ENCODE measurements at regions of chrX and their contacts with region 1.

Region 1: GRCh38 chrX:109840585-109840984 is 107.5 kb upstream of the ACSL4 start:
- DNase-seq: no peak
- H3K4me3 Mint-ChIP-seq: no peak overlapping the region
- H3K27ac Mint-ChIP-seq: no peak overlapping the region
- H3K4me1 Mint-ChIP-seq: peaks cover 5% of the 10 kb centered on the region
- H3K27me3 Mint-ChIP-seq: no peaks in the 10 kb centered on the region

Region 2: GRCh38 chrX:109624641-109625616 is 215.7 kb before region 1 on chrX and contains the start of gene KCNE5:
- intact Hi-C with region 1: no loop called
- DNase-seq: no peak
- H3K4me3 Mint-ChIP-seq: no peak within 1 kb of the TSS
- H3K27ac Mint-ChIP-seq: no peak within 1 kb of the TSS
- H3K4me1 Mint-ChIP-seq: peaks cover 9% of the 10 kb centered on the region
- H3K27me3 Mint-ChIP-seq: peaks cover 2% of the 10 kb centered on the region
- total RNA-seq, gene KCNE5: 0.52 and 0.81 TPM in 2 replicates

Region 3: GRCh38 chrX:109782994-109783700 is 57.4 kb before region 1 on chrX:
- intact Hi-C with region 1: loop called (anchors 1 kb)
- DNase-seq: no peak
- H3K4me3 Mint-ChIP-seq: peak overlapping the region; percentile 76
- H3K27ac Mint-ChIP-seq: peak overlapping the region; percentile 92
- H3K4me1 Mint-ChIP-seq: peaks cover 17% of the 10 kb centered on the region
- H3K27me3 Mint-ChIP-seq: no peaks in the 10 kb centered on the region